ENCODE measurements at regions of chr5 and their contacts with region 1.

Region 1: GRCh38 chr5:111461255-111461671 is 51.1 kb downstream of the STARD4 start:
- DNase-seq: peak; percentile 31
- ATAC-seq: peak; percentile 98
- H3K4me3 Mint-ChIP-seq: no peak overlapping the region
- H3K27ac Mint-ChIP-seq: no peak overlapping the region
- H3K4me1 Mint-ChIP-seq: peaks cover 23% of the 10 kb centered on the region
- H3K27me3 Mint-ChIP-seq: no peaks in the 10 kb centered on the region
- CTCF ChIP-seq: no peak

Region 2: GRCh38 chr5:111223889-111224563 is 237.2 kb before region 1 on chr5 and contains the start of gene CAMK4:
- CTCF ChIA-PET with region 1: interaction called, 13 read pairs
- POLR2A ChIA-PET with region 1: no interaction called
- DNase-seq: peak; percentile 80
- ATAC-seq: peak; percentile 87
- H3K4me3 Mint-ChIP-seq: peak within 1 kb of the TSS; percentile 82
- H3K27ac Mint-ChIP-seq: no peak within 1 kb of the TSS
- H3K4me1 Mint-ChIP-seq: peaks cover 47% of the 10 kb centered on the region
- H3K27me3 Mint-ChIP-seq: peaks cover 31% of the 10 kb centered on the region
- CTCF ChIP-seq: no peak
- total RNA-seq, gene CAMK4: 5.8 to 10.6 TPM (median 7.4 TPM) in 3 replicates

Region 3: GRCh38 chr5:111278845-111279504 is 182.3 kb before region 1 on chr5:
- CTCF ChIA-PET with region 1: interaction called, 14 read pairs
- POLR2A ChIA-PET with region 1: no interaction called
- DNase-seq: peak; percentile 88
- ATAC-seq: peak; percentile 100
- H3K4me3 Mint-ChIP-seq: no peak overlapping the region
- H3K27ac Mint-ChIP-seq: no peak overlapping the region
- H3K4me1 Mint-ChIP-seq: peaks cover 2% of the 10 kb centered on the region; the same call in 1 of the 2 replicates
- H3K27me3 Mint-ChIP-seq: no peaks in the 10 kb centered on the region
- CTCF ChIP-seq: peak; percentile 85

Region 4: GRCh38 chr5:111313017-111313724 is 148.1 kb before region 1 on chr5:
- CTCF ChIA-PET with region 1: interaction called, 11 read pairs
- POLR2A ChIA-PET with region 1: no interaction called
- DNase-seq: no peak
- ATAC-seq: no peak
- H3K4me3 Mint-ChIP-seq: no peak overlapping the region
- H3K27ac Mint-ChIP-seq: no peak overlapping the region
- H3K4me1 Mint-ChIP-seq: peaks cover 16% of the 10 kb centered on the region
- H3K27me3 Mint-ChIP-seq: no peaks in the 10 kb centered on the region
- CTCF ChIP-seq: no peak

Region 5: GRCh38 chr5:111425205-111425604 is 36.1 kb before region 1 on chr5:
- CTCF ChIA-PET with region 1: interaction called, 10 read pairs
- POLR2A ChIA-PET with region 1: no interaction called
- DNase-seq: no peak
- ATAC-seq: peak; percentile 66
- H3K4me3 Mint-ChIP-seq: no peak overlapping the region
- H3K27ac Mint-ChIP-seq: 0 out of 2 replicates have a peak overlapping the region, but pooled peaks have one; percentile 15
- H3K4me1 Mint-ChIP-seq: peaks cover 39% of the 10 kb centered on the region
- H3K27me3 Mint-ChIP-seq: no peaks in the 10 kb centered on the region
- CTCF ChIP-seq: no peak

Region 6: GRCh38 chr5:111447822-111448221 is 13.4 kb before region 1 on chr5:
- CTCF ChIA-PET with region 1: interaction called, 17 read pairs
- POLR2A ChIA-PET with region 1: no interaction called
- DNase-seq: no peak
- ATAC-seq: peak; percentile 81
- H3K4me3 Mint-ChIP-seq: peak overlapping the region; percentile 52
- H3K27ac Mint-ChIP-seq: peak overlapping the region; percentile 96
- H3K4me1 Mint-ChIP-seq: peaks cover 33% of the 10 kb centered on the region
- H3K27me3 Mint-ChIP-seq: no peaks in the 10 kb centered on the region; the same call in 1 of the 2 replicates
- CTCF ChIP-seq: no peak

Region 7: GRCh38 chr5:111596705-111597104 is 135.4 kb after region 1 on chr5:
- CTCF ChIA-PET with region 1: no interaction called
- POLR2A ChIA-PET with region 1: no interaction called
- DNase-seq: no peak
- ATAC-seq: no peak
- H3K4me3 Mint-ChIP-seq: no peak overlapping the region
- H3K27ac Mint-ChIP-seq: no peak overlapping the region
- H3K4me1 Mint-ChIP-seq: peaks cover 14% of the 10 kb centered on the region
- H3K27me3 Mint-ChIP-seq: no peaks in the 10 kb centered on the region; the same call in 1 of the 2 replicates
- CTCF ChIP-seq: no peak